ENCODE measurements at regions of chr14 and their contacts with region 1.

Region 1: DNA sequence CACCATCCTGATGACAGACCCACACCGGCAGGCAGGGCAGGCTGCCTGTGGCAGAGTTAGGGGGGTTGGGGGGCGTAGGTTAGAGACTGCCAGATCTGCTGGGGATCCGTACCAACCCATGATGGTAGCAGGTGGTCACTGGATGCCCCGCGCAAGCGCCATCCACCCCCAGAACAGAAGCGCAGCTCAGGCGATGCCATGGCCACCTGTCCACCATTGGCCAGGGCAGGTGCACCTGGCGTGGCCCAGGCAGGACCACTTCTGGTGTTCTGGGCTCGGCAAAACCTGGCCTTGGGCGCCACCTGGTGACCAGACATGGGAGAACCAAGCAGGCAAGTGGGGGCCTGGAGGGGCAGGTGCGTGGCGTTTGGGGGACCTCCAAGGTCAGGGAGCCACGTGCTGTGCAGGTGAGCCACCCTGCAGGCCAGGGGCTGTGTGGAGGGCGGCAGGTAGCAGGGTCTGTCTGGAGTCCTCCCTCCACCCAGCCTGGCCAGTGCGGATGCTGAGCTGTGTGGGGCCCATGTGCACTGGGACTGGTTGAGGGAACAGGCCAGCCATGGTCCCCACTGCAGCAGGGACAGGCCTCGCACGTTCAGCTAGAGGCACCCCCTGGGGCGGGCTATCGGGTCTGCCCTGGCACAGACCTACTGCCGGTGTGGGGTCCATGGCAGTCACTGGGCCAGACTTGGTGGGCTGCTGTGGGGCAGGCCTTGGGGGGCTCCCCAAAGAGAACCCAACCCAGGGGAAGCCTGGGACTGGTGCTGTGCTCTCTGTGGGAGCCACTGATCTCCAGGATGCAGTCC is 15.6 kb downstream of the BAG5 start:
- DNase-seq: peak; percentile 94
- ATAC-seq: peak; percentile 67
- H3K4me3 Mint-ChIP-seq: no peak overlapping the region
- H3K27ac Mint-ChIP-seq: no peak overlapping the region
- H3K4me1 Mint-ChIP-seq: peaks cover 7% of the 10 kb centered on the region
- H3K27me3 Mint-ChIP-seq: no peaks in the 10 kb centered on the region
- CTCF ChIP-seq: peak; percentile 84

Region 2: DNA sequence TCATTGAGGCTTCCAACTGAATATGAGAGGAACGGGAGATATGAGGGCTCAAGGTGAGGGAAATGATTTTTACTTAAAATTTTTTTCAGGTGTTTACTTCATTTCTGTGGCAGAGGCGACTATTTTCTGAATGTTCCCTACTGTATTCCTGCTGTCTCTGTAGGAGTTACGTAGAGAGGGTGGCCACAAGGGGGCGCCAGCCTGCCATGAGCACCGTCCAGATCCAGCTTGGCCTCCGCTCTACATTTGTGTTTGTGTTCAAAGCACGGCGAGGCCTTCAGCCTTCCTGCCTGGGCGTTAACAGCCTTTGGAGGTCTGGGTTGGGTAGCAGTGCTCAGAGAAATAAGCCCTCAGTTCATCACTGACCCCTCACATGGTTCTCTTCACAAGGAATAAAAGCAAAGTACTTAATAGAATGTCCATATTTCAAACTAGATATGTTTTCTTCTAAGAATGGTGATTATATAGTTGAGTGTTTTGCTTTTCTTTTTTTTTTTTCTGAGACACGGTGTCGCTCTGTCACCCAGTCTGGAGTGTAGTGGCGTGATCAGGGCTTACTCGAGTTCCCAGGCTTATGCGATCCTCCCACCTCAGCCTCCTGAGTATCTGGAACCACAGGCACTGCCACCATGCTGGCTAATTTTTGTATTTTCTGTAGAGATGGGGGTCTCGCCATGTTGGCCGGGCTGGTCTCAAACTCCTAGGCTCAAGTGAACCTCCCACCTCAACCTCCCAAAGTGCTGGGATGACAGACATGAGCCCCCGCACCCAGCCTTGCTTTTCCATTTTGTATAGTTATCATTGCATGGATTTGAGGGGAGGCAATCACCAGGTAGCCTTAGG is 46.5 kb before region 1 on chr14:
- CTCF ChIA-PET with region 1: interaction called, 12 read pairs
- POLR2A ChIA-PET with region 1: no interaction called
- DNase-seq: peak; percentile 92
- ATAC-seq: peak; percentile 96
- H3K4me3 Mint-ChIP-seq: no peak overlapping the region
- H3K27ac Mint-ChIP-seq: peak overlapping the region; percentile 91
- H3K4me1 Mint-ChIP-seq: peaks cover 2% of the 10 kb centered on the region; the same call in 1 of the 2 replicates
- H3K27me3 Mint-ChIP-seq: no peaks in the 10 kb centered on the region
- CTCF ChIP-seq: peak; percentile 90

Region 3: GRCh38 chr14:103510311-103511021 is 36.4 kb before region 1 on chr14:
- CTCF ChIA-PET with region 1: interaction called, 455 read pairs
- POLR2A ChIA-PET with region 1: no interaction called
- DNase-seq: peak; percentile 37
- ATAC-seq: peak; percentile 57
- H3K4me3 Mint-ChIP-seq: no peak overlapping the region
- H3K27ac Mint-ChIP-seq: no peak overlapping the region
- H3K4me1 Mint-ChIP-seq: no peaks in the 10 kb centered on the region
- H3K27me3 Mint-ChIP-seq: no peaks in the 10 kb centered on the region
- CTCF ChIP-seq: no peak

Region 4: DNA sequence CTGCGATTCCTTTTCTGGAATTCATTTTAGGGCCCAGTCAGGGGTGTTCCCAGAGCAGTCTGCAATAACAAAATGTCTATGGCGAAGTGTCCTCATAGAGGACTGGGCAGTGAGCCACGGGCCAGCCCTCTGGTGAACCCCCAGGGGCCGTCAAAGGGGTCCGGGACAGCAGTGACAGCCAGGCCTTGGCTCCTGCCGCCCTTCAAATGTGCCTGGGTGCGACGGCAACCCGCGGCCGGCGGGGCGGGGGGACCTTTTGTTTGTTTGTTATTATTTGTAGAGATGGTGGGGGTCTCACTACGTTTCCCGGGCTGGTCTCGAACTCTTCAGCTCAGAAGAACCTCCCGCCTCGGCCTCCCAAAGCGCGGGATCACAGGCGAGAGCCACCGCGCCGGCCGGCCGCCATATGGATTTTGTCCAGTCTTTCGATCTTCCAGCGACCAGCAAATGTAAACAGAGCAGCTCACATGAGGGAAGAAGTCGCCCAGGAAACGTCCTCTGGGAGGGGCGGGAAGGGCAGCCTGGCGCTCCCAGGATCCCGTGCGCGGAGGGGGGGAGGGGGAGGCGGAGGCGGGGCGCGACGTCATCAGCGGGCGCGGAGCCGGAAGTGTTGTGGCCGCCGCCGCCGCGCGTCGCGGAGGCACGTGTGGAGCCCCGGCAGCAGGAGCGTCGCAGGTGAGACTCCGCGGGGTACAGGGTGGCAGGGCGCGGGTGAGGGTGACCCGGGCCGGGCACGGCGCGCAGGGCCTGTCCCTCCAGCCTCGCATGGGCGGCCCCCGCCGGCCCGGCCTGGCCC is 18.1 kb before region 1 on chr14 and contains the start of gene TRMT61A:
- CTCF ChIA-PET with region 1: interaction called, 455 read pairs
- POLR2A ChIA-PET with region 1: interaction called, 65 read pairs
- DNase-seq: peak; percentile 73
- ATAC-seq: peak; percentile 64
- H3K4me3 Mint-ChIP-seq: peak within 1 kb of the TSS; percentile 93
- H3K27ac Mint-ChIP-seq: peak within 1 kb of the TSS; percentile 96
- H3K4me1 Mint-ChIP-seq: peaks cover 15% of the 10 kb centered on the region
- H3K27me3 Mint-ChIP-seq: peaks cover 21% of the 10 kb centered on the region
- CTCF ChIP-seq: no peak
- total RNA-seq, gene TRMT61A: 11.8 to 15.5 TPM (median 12.3 TPM) in 3 replicates

Region 5: DNA sequence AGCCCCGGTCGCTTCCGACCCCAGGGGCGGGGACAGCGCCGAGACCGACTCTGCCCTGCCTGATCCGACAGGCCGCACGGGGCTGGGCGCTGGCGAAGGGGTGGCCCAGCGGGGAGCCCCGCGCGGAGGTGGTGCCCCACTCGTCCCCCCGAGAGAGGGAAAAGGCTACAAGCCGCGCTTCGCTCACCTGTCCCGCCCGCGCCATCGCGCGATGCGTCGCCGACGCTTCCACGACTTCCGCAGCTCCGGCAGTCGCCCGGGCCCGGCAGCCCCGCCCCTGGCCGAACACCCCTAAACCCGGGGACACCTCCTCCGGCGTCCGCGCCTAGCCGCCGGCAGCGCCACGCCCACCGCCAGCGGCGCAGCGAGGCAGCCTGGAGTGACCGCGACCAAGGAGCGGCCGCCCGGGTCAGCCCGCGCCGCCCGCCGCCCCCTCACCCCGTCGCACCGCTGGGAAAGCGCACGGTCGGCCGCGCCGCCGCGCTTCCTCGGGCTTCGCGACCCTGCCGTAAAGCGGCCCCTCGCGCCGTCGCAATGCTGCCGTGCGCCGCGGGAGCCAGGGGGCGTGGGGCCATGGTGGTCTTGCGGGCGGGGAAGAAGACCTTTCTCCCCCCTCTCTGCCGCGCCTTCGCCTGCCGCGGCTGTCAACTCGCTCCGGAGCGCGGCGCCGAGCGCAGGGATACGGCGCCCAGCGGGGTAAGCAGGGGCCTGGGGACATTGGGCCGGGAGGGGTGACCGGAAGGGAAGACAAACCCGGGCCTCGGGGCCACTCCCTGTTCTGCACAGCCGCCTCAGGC is 15.8 kb after region 1 on chr14 and contains the starts of genes BAG5 and COA8:
- CTCF ChIA-PET with region 1: interaction called, 15 read pairs
- POLR2A ChIA-PET with region 1: interaction called, 3 read pairs
- DNase-seq: peak; percentile 87
- ATAC-seq: peak; percentile 79
- H3K4me3 Mint-ChIP-seq: peak within 1 kb of the TSS; percentile 98
- H3K27ac Mint-ChIP-seq: peak within 1 kb of the TSS; percentile 95
- H3K4me1 Mint-ChIP-seq: peaks cover 27% of the 10 kb centered on the region
- H3K27me3 Mint-ChIP-seq: no peaks in the 10 kb centered on the region
- CTCF ChIP-seq: no peak
- total RNA-seq, gene BAG5: 23.9 to 29.2 TPM (median 24.8 TPM) in 3 replicates
- total RNA-seq, gene COA8: 34.7 to 36.7 TPM (median 36.4 TPM) in 3 replicates

Measured in WTC11 (cell line).